Body of pancreas (tissue), 4 donors: ENCODE measurements at regions of chr1 and their contacts with region 1.

Region 1: DNA sequence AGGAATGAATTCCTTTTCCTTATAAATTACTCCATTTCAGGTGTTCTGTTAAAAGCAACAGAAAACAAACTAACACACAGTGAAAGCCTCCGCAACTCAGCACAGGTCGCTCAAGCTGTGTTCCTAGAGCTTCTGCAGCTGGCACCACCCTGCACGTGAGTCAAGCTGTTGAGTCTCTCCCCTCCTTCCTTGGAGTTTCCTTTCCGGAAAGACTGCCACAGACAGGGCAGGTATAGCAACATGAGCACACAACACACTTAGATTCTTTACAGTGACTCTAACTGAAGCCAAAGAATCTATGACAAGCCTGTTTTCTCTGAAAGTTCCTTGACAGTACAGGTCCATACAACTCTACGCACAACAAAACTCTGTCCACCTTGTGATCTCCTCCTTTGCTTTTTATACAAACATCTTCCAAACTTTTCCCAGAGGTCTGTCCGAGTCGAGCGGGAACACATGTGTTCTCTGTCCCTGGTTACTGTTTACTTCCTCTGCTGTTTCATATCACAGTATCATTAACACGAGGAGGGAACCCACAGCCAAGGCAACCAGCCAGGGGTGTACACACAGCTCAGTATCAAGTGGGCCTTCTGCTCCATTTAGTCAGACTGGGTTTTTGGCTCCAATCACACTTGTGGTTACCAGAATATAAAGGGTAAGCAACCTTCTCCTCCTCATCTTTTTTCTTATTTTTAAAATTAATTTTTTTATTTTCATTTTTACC is 38.7 kb upstream of the DESI2 start:
- DNase-seq: peak; percentile 39 to 66 (median 56)
- ATAC-seq: peak; percentile 83
- H3K4me3 ChIP-seq: no peak overlapping the region
- H3K27ac ChIP-seq: peak overlapping the region; percentile 3 to 61 (median 40)
- H3K4me1 ChIP-seq: peaks cover 11% of the 10 kb centered on the region
- H3K27me3 ChIP-seq: no peaks in the 10 kb centered on the region
- CTCF ChIP-seq: no peak
- POLR2A ChIP-seq: peak in 1 of 3 donors; percentile 16

Region 2: GRCh38 chr1:245031041-245031440 is 416.8 kb after region 1 on chr1:
- intact Hi-C with region 1: loop called (anchors 10 kb)
- DNase-seq: no peak
- ATAC-seq: no peak
- H3K4me3 ChIP-seq: no peak overlapping the region
- H3K27ac ChIP-seq: no peak overlapping the region
- H3K4me1 ChIP-seq: no peaks in the 10 kb centered on the region
- H3K27me3 ChIP-seq: no peaks in the 10 kb centered on the region
- CTCF ChIP-seq: no peak
- POLR2A ChIP-seq: no peak